ENCODE measurements at regions of chr1 and their contacts with region 1.

Region 1: GRCh38 chr1:73761559-73761958 is 436.4 kb downstream of the LRRIQ3 start:
- DNase-seq: no peak
- H3K4me3 ChIP-seq: no peak overlapping the region
- CTCF ChIP-seq: no peak
- POLR2A ChIP-seq: no peak

Region 2: DNA sequence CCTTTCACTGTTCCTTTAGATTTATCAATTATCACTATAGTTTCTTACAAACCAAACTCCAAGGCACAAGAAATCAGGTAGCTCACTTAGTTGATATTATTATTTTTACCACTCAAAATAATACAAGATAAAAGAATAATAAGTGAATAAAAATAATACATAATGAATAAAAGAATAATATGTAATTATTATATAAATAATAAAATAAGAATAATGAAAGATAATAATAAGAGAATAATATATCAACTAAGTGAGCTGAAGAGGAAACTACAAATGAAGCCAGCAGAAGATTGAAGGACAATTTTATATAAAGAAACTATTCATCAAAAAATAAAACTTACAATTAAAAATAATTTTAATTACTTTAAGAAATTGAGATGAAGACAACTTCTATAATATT is 345.8 kb after region 1 on chr1:
- intact Hi-C with region 1: no loop called
- DNase-seq: no peak
- H3K4me3 ChIP-seq: no peak overlapping the region
- CTCF ChIP-seq: no peak
- POLR2A ChIP-seq: no peak

Region 3: GRCh38 chr1:75087278-75087677 is 1325.7 kb after region 1 on chr1:
- intact Hi-C with region 1: loop called (anchors 5 kb)
- DNase-seq: no peak
- H3K4me3 ChIP-seq: no peak overlapping the region
- CTCF ChIP-seq: no peak
- POLR2A ChIP-seq: no peak

Measured in lower leg skin (tissue), 4 donors.